Ovary (tissue), 10 donors: ENCODE measurements at regions of chr9 and their contacts with region 1.

Region 1: DNA sequence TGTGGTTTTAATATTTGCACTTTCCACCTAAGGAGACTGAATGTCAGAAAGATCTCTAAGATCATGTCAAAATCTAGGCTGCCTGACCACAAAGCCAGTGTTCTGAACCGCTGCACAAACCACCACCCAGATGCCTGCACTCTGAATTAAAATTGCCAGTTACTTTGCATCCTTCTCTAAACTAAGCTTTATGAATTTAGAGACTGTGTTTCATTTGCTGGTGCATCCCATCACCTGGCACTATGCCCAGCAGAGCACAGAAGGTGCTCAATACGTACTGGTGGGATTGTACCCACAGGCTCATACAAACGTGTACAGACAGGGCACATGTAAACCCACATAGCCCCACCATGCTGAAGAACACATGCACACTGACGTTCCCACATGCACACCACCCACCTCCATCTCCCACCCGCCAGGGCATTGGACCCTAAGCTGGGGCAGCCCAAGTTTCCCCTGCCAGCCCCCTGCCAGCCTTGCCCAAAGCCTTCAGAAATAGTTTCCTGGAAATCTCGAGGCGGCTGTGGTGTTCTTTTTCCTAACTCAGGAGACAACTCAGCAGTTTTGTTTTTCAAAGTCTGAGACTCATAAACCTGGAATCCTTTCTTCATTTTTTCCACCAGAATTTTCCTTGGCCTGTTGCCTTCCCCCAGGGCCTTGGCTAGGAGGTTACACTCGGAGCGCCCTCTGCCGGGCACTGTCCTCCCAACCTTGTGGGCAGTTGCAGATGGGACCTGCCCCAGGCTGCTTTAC is 9.6 kb upstream of the TRAF1 start:
- DNase-seq: peak; percentile 95 to 97 (median 97)
- H3K4me3 ChIP-seq: peak overlapping the region; percentile 20
- H3K27ac ChIP-seq: peak overlapping the region; percentile 31 to 80
- H3K4me1 ChIP-seq: peaks cover 36% of the 10 kb centered on the region
- H3K27me3 ChIP-seq: no peaks in the 10 kb centered on the region
- CTCF ChIP-seq: peak; percentile 82 to 91 (median 89)
- EP300 ChIP-seq: no peak
- POLR2A ChIP-seq: no peak

Region 2: GRCh38 chr9:120830151-120830550 is 106.0 kb before region 1 on chr9:
- intact Hi-C with region 1: no loop called
- DNase-seq: no peak
- H3K4me3 ChIP-seq: no peak overlapping the region
- H3K27ac ChIP-seq: no peak overlapping the region
- H3K4me1 ChIP-seq: no peaks in the 10 kb centered on the region
- H3K27me3 ChIP-seq: no peaks in the 10 kb centered on the region
- CTCF ChIP-seq: no peak
- EP300 ChIP-seq: no peak
- POLR2A ChIP-seq: no peak

Region 3: GRCh38 chr9:120868676-120869359 is 67.4 kb before region 1 on chr9:
- intact Hi-C with region 1: loop called in 2 of 4 experiments (anchors 2 to 10 kb)
- DNase-seq: peak; percentile 97 to 98 (median 97)
- H3K4me3 ChIP-seq: peak overlapping the region; percentile 41
- H3K27ac ChIP-seq: peak overlapping the region; percentile 54 to 83
- H3K4me1 ChIP-seq: peaks cover 6% of the 10 kb centered on the region
- H3K27me3 ChIP-seq: no peaks in the 10 kb centered on the region
- CTCF ChIP-seq: peak in 2 of 3 donors; percentile 62 to 70
- EP300 ChIP-seq: no peak
- POLR2A ChIP-seq: peak; percentile 46

Region 4: DNA sequence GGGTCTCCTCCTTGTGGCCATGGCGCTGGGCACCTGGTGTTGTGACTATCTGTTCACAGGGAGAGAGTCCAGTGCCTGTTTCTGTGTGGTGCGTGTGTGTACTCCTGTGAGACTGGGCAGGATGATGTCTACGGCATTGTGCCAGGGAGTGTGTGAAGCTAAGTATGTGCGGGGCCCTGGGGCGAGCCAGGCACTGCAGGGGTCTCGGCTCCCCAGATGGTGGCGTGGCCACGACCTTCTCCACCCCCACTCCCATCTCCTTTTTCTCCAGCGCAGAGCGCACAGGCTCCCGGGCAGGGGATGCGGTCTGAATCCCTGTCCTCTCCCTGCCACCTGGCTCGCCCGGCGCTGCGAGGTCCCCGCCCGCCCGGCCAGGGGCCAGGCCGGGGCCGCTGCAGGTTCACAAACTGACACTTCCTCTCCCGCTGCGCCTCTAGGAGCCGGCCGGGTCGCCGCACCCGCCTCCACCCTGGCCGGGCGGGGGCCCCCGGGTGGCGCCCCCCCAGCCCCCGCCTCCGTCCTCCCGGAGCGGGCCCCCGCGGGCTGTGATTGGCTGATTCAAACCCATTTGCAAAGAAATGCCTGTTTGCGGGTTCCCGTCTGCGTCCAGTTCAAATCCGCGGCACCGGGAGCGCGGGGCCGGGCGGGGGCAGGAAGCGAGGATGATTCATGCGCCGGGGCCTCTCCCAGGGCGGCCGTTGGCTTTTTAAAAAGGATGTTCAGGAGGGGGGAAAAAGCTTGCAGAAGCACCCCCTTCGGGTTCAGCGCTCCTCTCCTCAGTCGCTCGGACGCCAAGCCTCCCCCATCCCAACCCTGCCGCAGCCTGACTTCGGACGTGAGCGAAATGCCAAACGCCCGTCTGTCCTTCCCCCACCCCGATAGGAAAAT is 60.0 kb before region 1 on chr9:
- intact Hi-C with region 1: loop called in 3 of 4 experiments (anchors 5 to 10 kb)
- DNase-seq: peak; percentile 85 to 90 (median 88)
- H3K4me3 ChIP-seq: peak overlapping the region; percentile 52
- H3K27ac ChIP-seq: peak overlapping the region; percentile 97 to 99
- H3K4me1 ChIP-seq: no peaks in the 10 kb centered on the region
- H3K27me3 ChIP-seq: no peaks in the 10 kb centered on the region
- CTCF ChIP-seq: peak in 2 of 3 donors; percentile 7 to 14
- EP300 ChIP-seq: no peak
- POLR2A ChIP-seq: peak; percentile 33

Region 5: GRCh38 chr9:120882935-120883607 is 53.1 kb before region 1 on chr9:
- intact Hi-C with region 1: loop called in 3 of 4 experiments (anchors 5 to 10 kb)
- DNase-seq: no peak
- H3K4me3 ChIP-seq: no peak overlapping the region
- H3K27ac ChIP-seq: no peak overlapping the region
- H3K4me1 ChIP-seq: peaks cover 1% of the 10 kb centered on the region
- H3K27me3 ChIP-seq: no peaks in the 10 kb centered on the region
- CTCF ChIP-seq: no peak
- EP300 ChIP-seq: no peak
- POLR2A ChIP-seq: no peak